HepG2 (cell line): ENCODE measurements at regions of chr7 and their contacts with region 1.

Region 1: GRCh38 chr7:56033671-56034432 is 17.4 kb downstream of the PSPH start:
- DNase-seq: peak; percentile 88
- ATAC-seq: peak; percentile 89
- H3K4me3 ChIP-seq: peak overlapping the region; percentile 77 to 98 (median 80)
- H3K27ac ChIP-seq: peak overlapping the region; percentile 87
- H3K4me1 ChIP-seq: peaks cover 45% of the 10 kb centered on the region
- H3K27me3 ChIP-seq: no peaks in the 10 kb centered on the region; a peak in 1 of 5 replicates
- CTCF ChIP-seq: peak; percentile 34
- EP300 ChIP-seq: no peak
- POLR2A ChIP-seq: peak; percentile 66 to 85
- RAD21 ChIP-seq: peak; percentile 10; the same call in 1 of the 2 replicates

Region 2: DNA sequence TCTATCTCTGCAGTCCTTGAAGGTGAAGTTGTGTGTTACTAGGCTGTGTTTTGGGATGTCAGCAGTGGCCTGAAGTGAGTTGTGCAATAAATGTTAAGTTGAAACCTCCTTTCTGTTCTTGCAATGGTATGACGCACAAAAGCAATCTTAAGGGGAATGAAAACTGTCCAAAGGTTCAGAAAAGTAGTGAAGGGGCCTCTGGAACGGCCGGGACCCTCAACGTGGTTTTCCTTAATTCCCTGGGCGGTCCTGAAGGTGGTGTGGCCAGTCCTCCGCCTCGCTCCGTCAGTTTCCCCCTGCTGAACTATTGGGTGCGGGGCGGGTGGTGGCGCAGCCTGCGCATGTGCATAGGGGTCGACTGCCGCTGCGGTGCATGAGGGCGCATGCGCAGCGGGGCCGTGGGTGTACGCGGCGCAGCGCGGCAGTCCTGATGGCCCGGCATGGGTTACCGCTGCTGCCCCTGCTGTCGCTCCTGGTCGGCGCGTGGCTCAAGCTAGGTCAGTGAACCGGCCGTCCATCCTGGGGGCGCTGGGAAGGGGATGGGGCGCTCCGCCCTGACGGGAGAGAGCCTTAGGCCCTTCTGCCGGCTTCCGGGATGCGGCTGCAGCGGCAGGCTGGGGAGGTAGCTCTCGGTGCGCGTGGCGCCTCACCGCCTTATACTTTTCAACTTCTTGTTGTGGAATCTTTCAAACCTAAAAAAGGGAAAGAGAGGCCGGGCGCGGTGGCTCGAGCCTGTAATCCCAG is 30.2 kb after region 1 on chr7 and contains the start of gene SUMF2:
- CTCF ChIA-PET with region 1: interaction called, 5 read pairs
- POLR2A ChIA-PET with region 1: interaction called, 26 read pairs
- in situ Hi-C with region 1: no loop called
- intact Hi-C with region 1: loop called (anchors 2 kb)
- DNase-seq: peak; percentile 83
- ATAC-seq: peak; percentile 97
- H3K4me3 ChIP-seq: peak within 1 kb of the TSS; percentile 59 to 91 (median 79); a peak in 5 of 6 replicates
- H3K27ac ChIP-seq: peak within 1 kb of the TSS; percentile 90
- H3K4me1 ChIP-seq: peaks cover 63% of the 10 kb centered on the region
- H3K27me3 ChIP-seq: no peaks in the 10 kb centered on the region
- CTCF ChIP-seq: peak; percentile 63
- EP300 ChIP-seq: no peak
- POLR2A ChIP-seq: peak; percentile 71 to 92
- RAD21 ChIP-seq: peak; percentile 69
- total RNA-seq, gene SUMF2: 22.4 and 54.4 TPM in 2 replicates

Region 3: DNA sequence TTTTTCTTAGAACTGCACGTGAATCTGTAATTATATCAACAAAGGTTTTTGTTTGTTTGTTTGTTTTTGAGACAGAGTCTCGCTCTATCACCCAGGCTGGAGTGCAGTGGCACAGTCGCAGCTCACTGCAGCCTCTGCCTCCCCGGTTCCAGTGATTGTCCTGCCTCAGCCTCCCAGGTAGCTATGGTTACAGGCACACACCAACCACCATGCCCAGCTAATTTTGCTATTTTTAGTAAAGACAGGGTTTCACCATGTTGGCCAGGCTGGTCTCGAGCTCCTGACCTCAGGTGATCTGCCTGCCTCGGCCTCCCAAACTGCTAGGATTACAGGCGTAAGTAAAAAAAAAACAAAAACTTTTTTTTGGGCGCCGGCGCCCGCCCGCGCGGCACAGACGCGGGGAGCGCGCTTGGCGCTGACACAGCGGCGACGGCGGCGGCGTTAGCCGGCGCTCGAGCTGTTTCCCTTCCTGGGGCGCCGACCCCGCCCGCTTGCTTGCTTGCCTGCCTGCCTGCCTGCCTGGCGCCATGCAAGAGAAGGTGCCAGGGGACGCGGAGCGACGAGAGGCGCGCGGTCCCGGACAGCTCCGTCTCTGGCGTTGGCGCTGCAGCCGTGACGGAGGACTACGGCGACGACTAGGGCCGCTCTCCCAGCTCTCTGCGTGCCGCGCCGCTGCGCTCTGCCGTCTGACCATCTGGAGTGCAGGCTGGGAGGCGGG is 253.7 kb after region 1 on chr7:
- CTCF ChIA-PET with region 1: no interaction called
- POLR2A ChIA-PET with region 1: no interaction called
- in situ Hi-C with region 1: no loop called
- intact Hi-C with region 1: no loop called
- DNase-seq: no peak
- ATAC-seq: peak; percentile 37
- H3K4me3 ChIP-seq: no peak overlapping the region
- H3K27ac ChIP-seq: no peak overlapping the region
- H3K4me1 ChIP-seq: no peaks in the 10 kb centered on the region
- H3K27me3 ChIP-seq: no peaks in the 10 kb centered on the region
- CTCF ChIP-seq: no peak
- EP300 ChIP-seq: no peak
- POLR2A ChIP-seq: no peak
- RAD21 ChIP-seq: no peak